CD4-positive, alpha-beta memory T cell (primary cell): ENCODE measurements at regions of chr3 and their contacts with region 1.

Region 1: DNA sequence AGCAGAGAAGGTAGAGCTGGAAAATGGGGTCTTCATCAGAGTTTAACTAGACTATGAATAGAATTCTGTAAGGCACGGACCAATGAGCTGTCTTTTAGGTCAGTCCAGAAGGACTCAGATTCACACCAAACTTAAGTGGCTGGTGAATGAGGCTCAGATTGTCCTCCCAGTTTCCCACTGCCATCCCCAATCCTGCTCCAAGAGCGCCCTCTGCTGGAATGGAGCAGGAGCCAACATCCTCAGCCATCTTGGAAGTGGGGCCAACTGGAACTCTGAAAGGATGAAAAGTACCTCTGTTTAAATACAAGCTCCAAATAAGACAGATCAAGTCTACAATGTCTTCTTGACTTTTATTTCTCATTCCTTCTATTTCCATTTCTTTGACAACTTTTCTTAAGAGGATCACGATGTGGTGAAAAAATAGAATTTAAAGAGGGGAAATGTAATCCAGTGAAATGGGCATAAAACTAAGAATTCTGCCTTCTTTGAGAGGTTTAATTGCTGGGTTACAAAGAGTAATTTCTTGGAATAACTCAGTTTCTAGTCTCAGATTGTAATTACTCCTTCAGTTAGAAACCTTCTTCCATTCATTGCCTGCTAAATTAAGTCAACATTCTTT is 217.1 kb upstream of the TPRG1 start:
- DNase-seq: peak; percentile 48 to 76 (median 68)
- H3K4me3 ChIP-seq: no peak overlapping the region
- H3K4me3 Mint-ChIP-seq: no peak overlapping the region
- H3K27ac ChIP-seq: no peak overlapping the region
- H3K27ac Mint-ChIP-seq: peak overlapping the region in 1 of 7 donors; percentile 45
- H3K4me1 ChIP-seq: no peaks in the 10 kb centered on the region
- H3K4me1 Mint-ChIP-seq: no peaks in the 10 kb centered on the region
- H3K27me3 ChIP-seq: no peaks in the 10 kb centered on the region
- H3K27me3 Mint-ChIP-seq: no peaks in the 10 kb centered on the region

Region 2: DNA sequence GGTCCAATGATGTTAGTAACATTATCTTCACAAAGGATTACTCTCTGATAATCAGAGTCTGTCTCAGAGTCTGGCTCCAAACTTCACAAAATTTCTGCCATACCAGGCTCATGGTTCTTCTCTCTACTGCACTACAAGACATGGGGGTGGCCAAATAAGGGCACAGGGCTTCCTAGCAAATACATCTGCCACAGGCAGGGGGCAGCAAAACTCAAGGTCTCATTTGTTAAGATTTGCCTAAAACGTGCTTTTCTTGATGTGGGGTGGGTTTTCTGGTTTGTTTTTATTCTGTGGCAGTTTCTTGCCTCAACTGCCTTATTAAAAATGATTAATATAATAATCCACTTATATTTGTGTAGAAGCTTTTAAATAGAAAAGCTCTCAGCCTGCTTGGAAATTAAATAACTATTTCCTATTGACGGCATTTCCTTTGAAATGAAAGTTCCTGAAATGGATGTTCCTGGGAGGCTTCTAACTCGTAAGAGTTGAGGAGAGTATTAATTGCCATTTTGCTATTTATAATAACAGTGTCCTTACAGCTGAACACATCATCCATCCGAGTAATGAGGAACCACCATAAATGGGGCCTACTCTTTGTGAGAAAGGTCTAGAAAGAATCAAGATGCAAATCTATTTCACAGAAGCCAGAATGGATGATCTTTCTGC is 1338.3 kb before region 1 on chr3:
- CTCF ChIA-PET with region 1: interaction called, 5 read pairs
- POLR2A ChIA-PET with region 1: no interaction called
- intact Hi-C with region 1: loop called (anchors 1 kb)
- DNase-seq: peak; percentile 21 to 38 (median 36)
- H3K4me3 ChIP-seq: no peak overlapping the region
- H3K4me3 Mint-ChIP-seq: no peak overlapping the region
- H3K27ac ChIP-seq: no peak overlapping the region
- H3K27ac Mint-ChIP-seq: no peak overlapping the region
- H3K4me1 ChIP-seq: no peaks in the 10 kb centered on the region
- H3K4me1 Mint-ChIP-seq: peaks cover 0 to 4% (median under 1%) of the 10 kb centered on the region in 4 donors
- H3K27me3 ChIP-seq: no peaks in the 10 kb centered on the region
- H3K27me3 Mint-ChIP-seq: peaks cover 5 to 11% of the 10 kb centered on the region in 2 donors

Region 3: GRCh38 chr3:188021502-188022040 is 933.1 kb before region 1 on chr3:
- CTCF ChIA-PET with region 1: no interaction called
- POLR2A ChIA-PET with region 1: no interaction called
- intact Hi-C with region 1: no loop called
- DNase-seq: no peak
- H3K4me3 ChIP-seq: no peak overlapping the region
- H3K4me3 Mint-ChIP-seq: no peak overlapping the region
- H3K27ac ChIP-seq: no peak overlapping the region
- H3K27ac Mint-ChIP-seq: no peak overlapping the region
- H3K4me1 ChIP-seq: no peaks in the 10 kb centered on the region
- H3K4me1 Mint-ChIP-seq: no peaks in the 10 kb centered on the region
- H3K27me3 ChIP-seq: no peaks in the 10 kb centered on the region
- H3K27me3 Mint-ChIP-seq: peaks cover 0 to 1% of the 10 kb centered on the region in 2 donors

Region 4: DNA sequence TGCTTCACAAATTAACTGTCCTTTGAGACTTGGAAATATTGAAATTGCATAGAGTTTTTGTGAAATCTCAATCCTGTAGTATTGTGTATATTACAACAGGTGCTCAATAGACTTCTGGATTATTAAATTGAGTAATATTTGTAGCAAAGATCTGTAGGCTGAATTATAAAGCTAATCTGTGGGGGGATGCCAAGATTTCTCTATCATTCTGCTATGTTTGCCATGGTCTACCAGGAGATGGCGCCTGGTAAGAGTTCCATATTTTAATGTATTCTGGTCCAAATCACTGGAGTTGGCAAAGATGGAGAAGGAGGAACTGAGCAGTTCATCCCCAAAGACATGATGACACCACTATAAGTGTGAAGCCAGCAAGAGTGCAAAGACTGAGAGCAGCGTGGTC is 123.8 kb before region 1 on chr3:
- CTCF ChIA-PET with region 1: interaction called, 19 read pairs
- POLR2A ChIA-PET with region 1: no interaction called
- intact Hi-C with region 1: loop called (anchors 5 kb)
- DNase-seq: no peak
- H3K4me3 ChIP-seq: no peak overlapping the region
- H3K4me3 Mint-ChIP-seq: no peak overlapping the region
- H3K27ac ChIP-seq: no peak overlapping the region
- H3K27ac Mint-ChIP-seq: no peak overlapping the region
- H3K4me1 ChIP-seq: peaks cover 17% of the 10 kb centered on the region
- H3K4me1 Mint-ChIP-seq: peaks cover 13 to 20% (median 19%) of the 10 kb centered on the region in 4 donors
- H3K27me3 ChIP-seq: no peaks in the 10 kb centered on the region
- H3K27me3 Mint-ChIP-seq: no peaks in the 10 kb centered on the region

Region 5: DNA sequence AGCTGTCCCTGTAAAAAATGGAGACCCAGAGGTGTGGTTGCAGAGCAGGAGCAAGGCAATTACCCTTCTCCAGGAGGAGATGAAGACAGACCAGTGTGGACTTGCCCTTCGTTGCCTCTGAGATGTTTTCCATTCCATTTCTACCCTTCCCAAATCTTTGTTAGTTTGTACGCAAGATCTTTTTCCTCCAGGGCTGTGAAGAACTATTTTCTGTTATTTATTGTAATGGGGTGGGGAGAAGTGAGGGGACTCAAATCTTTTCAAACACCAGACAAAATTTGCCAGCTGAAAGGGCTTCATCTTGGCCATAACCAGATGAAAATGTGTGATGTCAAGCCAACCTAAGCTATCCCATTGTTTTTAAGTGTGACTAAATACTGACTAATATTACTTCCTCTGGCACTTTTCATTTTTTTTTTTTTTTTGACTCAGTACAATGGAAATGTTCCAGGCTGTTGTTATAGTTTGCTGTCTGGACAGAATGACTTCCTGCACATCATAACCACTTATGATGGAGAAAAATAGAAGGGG is 54.2 kb before region 1 on chr3:
- CTCF ChIA-PET with region 1: no interaction called
- POLR2A ChIA-PET with region 1: no interaction called
- intact Hi-C with region 1: no loop called
- DNase-seq: no peak
- H3K4me3 ChIP-seq: no peak overlapping the region
- H3K4me3 Mint-ChIP-seq: no peak overlapping the region
- H3K27ac ChIP-seq: no peak overlapping the region
- H3K27ac Mint-ChIP-seq: no peak overlapping the region
- H3K4me1 ChIP-seq: no peaks in the 10 kb centered on the region
- H3K4me1 Mint-ChIP-seq: no peaks in the 10 kb centered on the region
- H3K27me3 ChIP-seq: no peaks in the 10 kb centered on the region
- H3K27me3 Mint-ChIP-seq: no peaks in the 10 kb centered on the region

Region 6: GRCh38 chr3:188936597-188937107 is 18.0 kb before region 1 on chr3:
- CTCF ChIA-PET with region 1: interaction called, 25 read pairs
- POLR2A ChIA-PET with region 1: no interaction called
- intact Hi-C with region 1: no loop called
- DNase-seq: no peak
- H3K4me3 ChIP-seq: no peak overlapping the region
- H3K4me3 Mint-ChIP-seq: no peak overlapping the region
- H3K27ac ChIP-seq: no peak overlapping the region
- H3K27ac Mint-ChIP-seq: no peak overlapping the region
- H3K4me1 ChIP-seq: no peaks in the 10 kb centered on the region
- H3K4me1 Mint-ChIP-seq: peaks cover 0 to under 1% (median 0%) of the 10 kb centered on the region in 4 donors
- H3K27me3 ChIP-seq: no peaks in the 10 kb centered on the region
- H3K27me3 Mint-ChIP-seq: no peaks in the 10 kb centered on the region

Region 7: GRCh38 chr3:189041482-189042090 is 86.9 kb after region 1 on chr3:
- CTCF ChIA-PET with region 1: interaction called, 71 read pairs
- POLR2A ChIA-PET with region 1: interaction called, 3 read pairs
- intact Hi-C with region 1: loop called (anchors 1 kb)
- DNase-seq: peak; percentile 72 to 82 (median 78)
- H3K4me3 ChIP-seq: no peak overlapping the region
- H3K4me3 Mint-ChIP-seq: no peak overlapping the region
- H3K27ac ChIP-seq: peak overlapping the region; percentile 52
- H3K27ac Mint-ChIP-seq: peak overlapping the region; percentile 8 to 87 (median 50)
- H3K4me1 ChIP-seq: peaks cover 7% of the 10 kb centered on the region
- H3K4me1 Mint-ChIP-seq: peaks cover 6 to 11% (median 8%) of the 10 kb centered on the region in 4 donors
- H3K27me3 ChIP-seq: no peaks in the 10 kb centered on the region
- H3K27me3 Mint-ChIP-seq: no peaks in the 10 kb centered on the region

Region 8: GRCh38 chr3:189148081-189148507 is 193.4 kb after region 1 on chr3:
- CTCF ChIA-PET with region 1: interaction called, 167 read pairs
- POLR2A ChIA-PET with region 1: interaction called, 3 read pairs
- intact Hi-C with region 1: loop called (anchors 1 kb)
- DNase-seq: peak; percentile 50 to 61 (median 60)
- H3K4me3 ChIP-seq: no peak overlapping the region
- H3K4me3 Mint-ChIP-seq: no peak overlapping the region
- H3K27ac ChIP-seq: no peak overlapping the region
- H3K27ac Mint-ChIP-seq: peak overlapping the region in 1 of 7 donors; percentile 62
- H3K4me1 ChIP-seq: peaks cover 19% of the 10 kb centered on the region
- H3K4me1 Mint-ChIP-seq: peaks cover 13 to 28% (median 21%) of the 10 kb centered on the region in 4 donors
- H3K27me3 ChIP-seq: no peaks in the 10 kb centered on the region
- H3K27me3 Mint-ChIP-seq: no peaks in the 10 kb centered on the region